Lower lobe of right lung (tissue), 2 donors: ENCODE measurements at regions of chr10 and their contacts with region 1.

Region 1: GRCh38 chr10:11525503-11525902 is 85.9 kb downstream of the USP6NL start:
- DNase-seq: no peak
- ATAC-seq: no peak
- H3K4me3 ChIP-seq: no peak overlapping the region
- H3K27ac ChIP-seq: no peak overlapping the region
- H3K4me1 ChIP-seq: peaks cover 33% of the 10 kb centered on the region
- H3K27me3 ChIP-seq: no peaks in the 10 kb centered on the region
- CTCF ChIP-seq: no peak

Region 2: GRCh38 chr10:11602919-11603523 is 77.5 kb after region 1 on chr10:
- intact Hi-C with region 1: loop called (anchors 10 kb)
- DNase-seq: no peak
- ATAC-seq: peak in 1 of 2 donors; percentile 74
- H3K4me3 ChIP-seq: no peak overlapping the region
- H3K27ac ChIP-seq: no peak overlapping the region
- H3K4me1 ChIP-seq: peaks cover 22% of the 10 kb centered on the region
- H3K27me3 ChIP-seq: no peaks in the 10 kb centered on the region
- CTCF ChIP-seq: no peak